ENCODE measurements at regions of chr7 and their contacts with region 1.

Region 1: GRCh38 chr7:99829524-99830160 is 1.8 kb downstream of the CYP3A43 start:
- DNase-seq: peak; percentile 96
- ATAC-seq: peak; percentile 85
- H3K4me3 ChIP-seq: peak overlapping the region; percentile 17 to 50 (median 46); a peak in 4 of 6 replicates
- H3K27ac ChIP-seq: peak overlapping the region; percentile 82
- H3K4me1 ChIP-seq: peaks cover 97% of the 10 kb centered on the region
- H3K27me3 ChIP-seq: no peaks in the 10 kb centered on the region
- CTCF ChIP-seq: no peak
- EP300 ChIP-seq: peak in 1 of 2 experiments; percentile 73; a peak in 2 of 4 replicates
- POLR2A ChIP-seq: peak in 1 of 2 experiments; percentile 34; a peak in 1 of 4 replicates
- RAD21 ChIP-seq: no peak

Region 2: GRCh38 chr7:99740573-99741440 is 88.8 kb before region 1 on chr7:
- CTCF ChIA-PET with region 1: no interaction called
- POLR2A ChIA-PET with region 1: no interaction called
- in situ Hi-C with region 1: no loop called
- intact Hi-C with region 1: loop called (anchors 5 kb)
- DNase-seq: peak; percentile 8
- ATAC-seq: no peak
- H3K4me3 ChIP-seq: no peak overlapping the region
- H3K27ac ChIP-seq: no peak overlapping the region
- H3K4me1 ChIP-seq: peaks cover 66% of the 10 kb centered on the region
- H3K27me3 ChIP-seq: no peaks in the 10 kb centered on the region
- CTCF ChIP-seq: no peak
- EP300 ChIP-seq: no peak
- POLR2A ChIP-seq: no peak
- RAD21 ChIP-seq: no peak

Region 3: DNA sequence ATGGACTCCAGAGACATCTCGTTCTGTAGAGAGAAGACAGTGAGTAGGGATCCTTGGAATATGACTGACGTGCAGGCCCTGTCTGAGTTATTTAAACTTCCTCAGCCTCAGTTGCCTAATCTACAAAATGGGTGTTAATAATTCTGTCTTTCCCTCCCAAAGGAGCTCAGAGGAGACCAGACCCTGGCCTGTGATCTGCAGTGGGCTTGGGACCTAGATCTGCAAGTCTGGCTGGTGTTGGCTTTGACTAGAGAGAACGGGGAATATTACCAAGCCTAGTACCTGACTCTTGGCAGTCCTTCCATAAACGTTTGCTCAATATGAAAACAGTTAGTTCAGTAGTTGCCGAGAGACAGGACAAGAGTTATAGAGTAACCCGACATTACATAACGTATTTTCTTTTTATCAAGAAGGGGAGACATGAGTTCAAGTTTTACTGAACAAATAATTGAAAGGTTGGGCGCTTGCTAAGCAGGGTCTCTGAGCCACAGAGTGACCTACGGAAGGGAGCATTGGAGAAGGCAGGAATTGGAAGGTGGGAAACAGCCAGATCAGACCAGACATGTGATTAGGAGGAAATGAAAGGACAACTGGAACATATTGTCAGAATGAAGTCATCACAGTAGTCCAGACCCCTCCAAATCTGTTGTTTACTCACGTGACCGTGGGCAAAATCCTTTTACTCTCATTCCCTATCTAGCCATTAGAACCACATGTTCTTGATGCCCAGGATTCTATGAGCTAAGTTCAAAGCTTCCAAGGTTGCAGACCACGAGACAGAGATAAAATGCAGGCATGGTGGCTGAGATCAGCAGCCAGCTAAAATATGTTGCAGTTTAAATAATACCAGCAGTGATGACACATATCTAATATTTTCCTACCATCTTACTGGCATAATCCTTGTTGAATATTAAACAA is 34.8 kb before region 1 on chr7:
- CTCF ChIA-PET with region 1: no interaction called
- POLR2A ChIA-PET with region 1: no interaction called
- in situ Hi-C with region 1: no loop called
- intact Hi-C with region 1: loop called (anchors 5 kb)
- DNase-seq: peak; percentile 93
- ATAC-seq: peak; percentile 91
- H3K4me3 ChIP-seq: peak overlapping the region in 1 of 3 experiments; percentile 2; a peak in 1 of 6 replicates
- H3K27ac ChIP-seq: peak overlapping the region; percentile 70
- H3K4me1 ChIP-seq: peaks cover 53% of the 10 kb centered on the region
- H3K27me3 ChIP-seq: no peaks in the 10 kb centered on the region
- CTCF ChIP-seq: no peak
- EP300 ChIP-seq: peak in 1 of 2 experiments; percentile 50; a peak in 1 of 4 replicates
- POLR2A ChIP-seq: no peak
- RAD21 ChIP-seq: no peak

Region 4: DNA sequence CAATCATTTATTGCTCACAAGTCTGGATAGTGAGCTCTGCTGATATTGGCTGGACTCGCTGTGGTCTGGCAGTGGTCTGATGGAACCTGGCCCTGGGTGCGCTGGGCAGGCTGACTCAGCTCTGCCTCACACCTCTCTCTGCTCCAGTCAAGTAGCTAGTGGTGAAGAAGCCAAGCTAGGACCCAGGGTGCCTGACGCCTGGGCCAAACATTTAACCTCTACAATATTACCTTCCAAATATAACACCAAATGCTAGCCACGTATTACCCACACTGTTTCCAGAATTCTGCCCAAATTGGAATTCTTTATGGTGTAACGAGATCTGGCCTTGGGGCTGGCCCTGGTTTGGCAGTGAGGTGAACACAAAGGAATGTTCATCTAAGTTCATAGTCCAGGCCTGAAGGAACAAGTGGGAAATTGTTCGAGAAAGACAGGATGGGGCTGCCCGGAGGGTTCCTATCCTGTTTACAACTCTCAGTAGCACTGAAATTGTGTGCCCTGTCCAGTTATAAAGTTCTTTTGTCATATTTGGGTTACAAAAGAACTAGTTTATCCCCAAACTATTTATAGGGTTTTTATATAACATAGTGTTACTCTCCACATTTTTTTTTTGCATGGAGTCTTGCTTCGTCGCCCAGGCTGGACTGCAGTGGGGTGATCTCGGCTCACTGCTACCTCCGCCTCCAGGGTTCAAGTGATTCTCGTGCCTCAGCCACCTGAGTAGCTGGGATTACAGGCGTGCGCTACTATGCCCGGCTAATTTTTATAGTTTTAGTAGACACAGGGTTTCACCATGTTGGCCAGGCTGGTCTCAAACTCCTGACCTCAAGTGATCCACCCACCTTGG is 30.9 kb after region 1 on chr7:
- CTCF ChIA-PET with region 1: no interaction called
- POLR2A ChIA-PET with region 1: interaction called, 18 read pairs
- in situ Hi-C with region 1: no loop called
- intact Hi-C with region 1: no loop called
- DNase-seq: peak; percentile 97
- ATAC-seq: peak; percentile 98
- H3K4me3 ChIP-seq: peak overlapping the region in 2 of 3 experiments; percentile 1 to 46; a peak in 4 of 6 replicates
- H3K27ac ChIP-seq: peak overlapping the region; percentile 92
- H3K4me1 ChIP-seq: peaks cover 73% of the 10 kb centered on the region
- H3K27me3 ChIP-seq: no peaks in the 10 kb centered on the region
- CTCF ChIP-seq: no peak
- EP300 ChIP-seq: peak in 1 of 2 experiments; percentile 86; a peak in 2 of 4 replicates
- POLR2A ChIP-seq: peak in 1 of 2 experiments; percentile 60; a peak in 2 of 4 replicates
- RAD21 ChIP-seq: no peak

Region 5: DNA sequence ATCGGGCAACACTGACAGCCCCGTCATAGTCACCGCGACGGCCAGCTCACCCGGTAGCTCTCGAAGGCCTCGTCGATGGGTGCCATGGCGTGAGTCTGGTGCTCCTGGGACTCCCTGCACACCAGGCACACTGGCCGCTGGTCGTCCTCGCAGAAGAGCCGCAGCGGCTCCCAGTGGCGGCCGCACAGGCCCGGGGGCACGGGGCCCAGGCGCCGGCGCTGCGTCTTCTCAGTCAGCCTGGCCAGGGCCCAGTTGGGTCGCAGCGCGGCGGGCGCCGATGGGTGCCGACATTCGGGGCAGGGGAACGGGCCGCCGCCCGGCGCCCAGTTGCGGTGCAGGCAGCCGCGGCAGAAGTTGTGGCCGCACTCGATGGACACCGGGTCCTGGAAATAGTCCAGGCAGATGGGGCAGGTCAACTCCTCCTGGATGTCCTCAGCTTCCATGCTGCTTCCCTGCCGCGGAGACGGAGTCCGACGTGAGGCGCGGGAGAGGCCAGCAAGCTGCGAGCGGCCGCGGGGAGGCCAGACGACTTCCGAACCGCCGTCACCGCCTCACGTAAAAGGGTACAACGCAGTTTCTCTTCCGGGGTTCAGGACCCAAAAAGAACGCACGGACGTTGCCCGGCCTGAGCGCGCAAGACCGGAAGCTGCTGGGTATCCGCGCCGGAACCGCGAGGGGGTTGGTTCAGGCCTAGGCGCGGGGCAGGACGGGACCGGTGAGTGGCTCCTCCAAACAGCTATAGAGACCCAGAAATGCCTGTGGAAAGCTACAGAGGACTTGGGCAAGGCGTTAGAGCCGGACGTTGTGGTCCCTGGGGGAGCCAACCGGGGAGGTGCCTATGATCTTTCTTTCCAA is 89.5 kb after region 1 on chr7 and contains the start of gene TRIM4:
- CTCF ChIA-PET with region 1: no interaction called
- POLR2A ChIA-PET with region 1: interaction called, 11 read pairs
- in situ Hi-C with region 1: no loop called
- intact Hi-C with region 1: no loop called
- DNase-seq: peak; percentile 90
- ATAC-seq: peak; percentile 99
- H3K4me3 ChIP-seq: peak within 1 kb of the TSS; percentile 82 to 90 (median 86)
- H3K27ac ChIP-seq: peak within 1 kb of the TSS; percentile 90
- H3K4me1 ChIP-seq: peaks cover 35% of the 10 kb centered on the region
- H3K27me3 ChIP-seq: no peaks in the 10 kb centered on the region; a peak in 1 of 5 replicates
- CTCF ChIP-seq: peak; percentile 67
- EP300 ChIP-seq: no peak; a peak in 1 of 4 replicates
- POLR2A ChIP-seq: peak; percentile 84 to 85
- RAD21 ChIP-seq: peak; percentile 67
- total RNA-seq, gene TRIM4: 21.7 and 25.1 TPM in 2 replicates